ENCODE measurements at regions of chr16 and their contacts with region 1.

Region 1: GRCh38 chr16:82924075-82924854 is 297.5 kb downstream of the CDH13 start:
- DNase-seq: no peak
- H3K4me3 ChIP-seq: no peak overlapping the region
- H3K27ac ChIP-seq: no peak overlapping the region
- H3K4me1 ChIP-seq: no peaks in the 10 kb centered on the region
- H3K27me3 ChIP-seq: no peaks in the 10 kb centered on the region
- CTCF ChIP-seq: no peak
- POLR2A ChIP-seq: no peak

Region 2: GRCh38 chr16:81940781-81941560 is 983.3 kb before region 1 on chr16:
- intact Hi-C with region 1: loop called (anchors 10 kb)
- DNase-seq: no peak
- H3K4me3 ChIP-seq: no peak overlapping the region
- H3K27ac ChIP-seq: no peak overlapping the region
- H3K4me1 ChIP-seq: no peaks in the 10 kb centered on the region
- H3K27me3 ChIP-seq: no peaks in the 10 kb centered on the region
- CTCF ChIP-seq: peak in 1 of 3 donors; percentile 29
- POLR2A ChIP-seq: no peak

Region 3: GRCh38 chr16:82603784-82604411 is 320.4 kb before region 1 on chr16:
- intact Hi-C with region 1: no loop called
- DNase-seq: peak in 1 of 2 donors; percentile 26
- H3K4me3 ChIP-seq: no peak overlapping the region
- H3K27ac ChIP-seq: no peak overlapping the region
- H3K4me1 ChIP-seq: no peaks in the 10 kb centered on the region
- H3K27me3 ChIP-seq: no peaks in the 10 kb centered on the region
- CTCF ChIP-seq: peak in 2 of 3 donors; percentile 20 to 34
- POLR2A ChIP-seq: no peak

Measured in breast epithelium (tissue), 4 donors.